Esophagus squamous epithelium (tissue), 5 donors: ENCODE measurements at regions of chr22 and their contacts with region 1.

Region 1: GRCh38 chr22:20020533-20021195 is at the start of gene TANGO2:
- DNase-seq: no peak
- H3K4me3 ChIP-seq: peak within 1 kb of the TSS; percentile 66 to 85 (median 73)
- H3K27ac ChIP-seq: peak within 1 kb of the TSS; percentile 84 to 92 (median 86)
- H3K4me1 ChIP-seq: peaks cover 24 to 57% (median 27%) of the 10 kb centered on the region in 3 donors
- H3K27me3 ChIP-seq: peaks cover 0 to 25% (median 0%) of the 10 kb centered on the region in 4 donors
- CTCF ChIP-seq: peak in 2 of 6 experiments; percentile 6 to 35
- POLR2A ChIP-seq: peak in 3 of 4 donors; percentile 81 to 91 (median 88)
- total RNA-seq, gene TANGO2: 14.0 to 28.2 (median 17.6) TPM

Region 2: GRCh38 chr22:19962233-19962908 is 58.3 kb before region 1 on chr22:
- intact Hi-C with region 1: loop called (anchors 5 kb)
- DNase-seq: no peak
- H3K4me3 ChIP-seq: peak overlapping the region; percentile 38 to 62 (median 41)
- H3K27ac ChIP-seq: peak overlapping the region; percentile 74 to 93 (median 88)
- H3K4me1 ChIP-seq: peaks cover 29 to 78% (median 35%) of the 10 kb centered on the region in 3 donors
- H3K27me3 ChIP-seq: no peaks in the 10 kb centered on the region
- CTCF ChIP-seq: peak; percentile 42 to 78 (median 65)
- POLR2A ChIP-seq: no peak

Region 3: DNA sequence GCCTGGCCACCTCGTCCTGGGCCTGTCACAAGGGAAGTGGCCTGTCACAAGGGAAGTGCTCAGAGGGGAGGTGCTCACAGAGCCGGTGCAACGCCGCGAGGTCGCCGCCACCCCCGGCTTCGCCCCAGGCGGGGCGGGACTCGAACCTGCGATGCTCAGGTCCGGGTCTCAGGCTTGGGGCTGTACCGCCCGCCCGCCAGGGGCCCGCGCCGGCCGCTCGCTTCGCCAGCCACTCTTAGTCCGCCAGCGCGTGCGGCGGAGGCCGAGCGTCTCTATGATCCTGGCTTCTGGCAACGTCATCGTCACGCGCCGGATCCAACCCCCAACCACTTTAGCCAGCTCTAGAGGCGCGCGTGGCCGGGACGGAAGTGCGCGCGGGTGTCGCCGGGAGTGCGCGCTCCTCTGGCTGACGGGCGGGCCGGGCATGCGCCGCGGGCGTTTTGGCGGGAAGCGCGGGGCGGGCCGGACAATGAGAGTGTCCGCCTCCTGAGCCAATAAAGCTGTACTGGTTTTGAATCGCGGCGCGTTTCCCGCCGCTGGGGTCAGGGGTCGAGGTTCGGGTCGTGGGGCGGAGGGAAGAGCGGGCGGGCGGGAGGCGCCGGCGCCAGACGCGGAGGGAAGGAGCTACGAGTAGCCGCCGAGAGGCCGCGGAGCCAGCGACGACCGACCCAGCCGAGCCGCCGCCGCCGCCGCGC is 96.4 kb after region 1 on chr22 and contains the start of gene TRMT2A:
- intact Hi-C with region 1: loop called (anchors 10 kb)
- DNase-seq: peak; percentile 93
- H3K4me3 ChIP-seq: peak within 1 kb of the TSS; percentile 77 to 90 (median 85)
- H3K27ac ChIP-seq: peak within 1 kb of the TSS; percentile 89 to 93 (median 92)
- H3K4me1 ChIP-seq: peaks cover 30 to 77% (median 30%) of the 10 kb centered on the region in 3 donors
- H3K27me3 ChIP-seq: no peaks in the 10 kb centered on the region
- CTCF ChIP-seq: peak in 2 of 6 experiments; percentile 17 to 53
- POLR2A ChIP-seq: peak in 3 of 4 donors; percentile 39 to 66 (median 60)
- total RNA-seq, gene TRMT2A: 30.9 to 58.6 (median 41.3) TPM

Region 4: GRCh38 chr22:20141186-20142077 is 120.8 kb after region 1 on chr22:
- intact Hi-C with region 1: no loop called
- DNase-seq: no peak
- H3K4me3 ChIP-seq: no peak overlapping the region
- H3K27ac ChIP-seq: no peak overlapping the region
- H3K4me1 ChIP-seq: peaks cover 16 to 31% (median 18%) of the 10 kb centered on the region in 3 donors
- H3K27me3 ChIP-seq: no peaks in the 10 kb centered on the region
- CTCF ChIP-seq: no peak
- POLR2A ChIP-seq: no peak